ENCODE measurements at regions of chr11 and their contacts with region 1.

Region 1: GRCh38 chr11:126989942-126990715 is 10.4 kb downstream of the KIRREL3 start:
- DNase-seq: peak; percentile 3 to 61 (median 28)
- ATAC-seq: no peak
- H3K4me3 ChIP-seq: no peak overlapping the region
- H3K4me3 Mint-ChIP-seq: no peak overlapping the region
- H3K27ac ChIP-seq: no peak overlapping the region
- H3K27ac Mint-ChIP-seq: no peak overlapping the region
- H3K4me1 ChIP-seq: peaks cover 3% of the 10 kb centered on the region
- H3K4me1 Mint-ChIP-seq: no peaks in the 10 kb centered on the region
- H3K27me3 ChIP-seq: peaks cover 0 to 13% of the 10 kb centered on the region in 2 experiments
- H3K27me3 Mint-ChIP-seq: peaks cover 44% of the 10 kb centered on the region
- CTCF ChIP-seq: peak; percentile 58

Region 2: GRCh38 chr11:125923012-125923579 is 1067.0 kb before region 1 on chr11:
- CTCF ChIA-PET with region 1: no interaction called
- POLR2A ChIA-PET with region 1: no interaction called
- intact Hi-C with region 1: loop called in 1 of 2 experiments (anchors 5 kb)
- DNase-seq: peak; percentile 29 to 78 (median 42)
- ATAC-seq: peak; percentile 61
- H3K4me3 ChIP-seq: no peak overlapping the region
- H3K4me3 Mint-ChIP-seq: no peak overlapping the region
- H3K27ac ChIP-seq: no peak overlapping the region
- H3K27ac Mint-ChIP-seq: no peak overlapping the region
- H3K4me1 ChIP-seq: no peaks in the 10 kb centered on the region
- H3K4me1 Mint-ChIP-seq: no peaks in the 10 kb centered on the region
- H3K27me3 ChIP-seq: peaks cover 2 to 3% of the 10 kb centered on the region in 2 experiments
- H3K27me3 Mint-ChIP-seq: peaks cover 22% of the 10 kb centered on the region
- CTCF ChIP-seq: peak; percentile 79

Region 3: DNA sequence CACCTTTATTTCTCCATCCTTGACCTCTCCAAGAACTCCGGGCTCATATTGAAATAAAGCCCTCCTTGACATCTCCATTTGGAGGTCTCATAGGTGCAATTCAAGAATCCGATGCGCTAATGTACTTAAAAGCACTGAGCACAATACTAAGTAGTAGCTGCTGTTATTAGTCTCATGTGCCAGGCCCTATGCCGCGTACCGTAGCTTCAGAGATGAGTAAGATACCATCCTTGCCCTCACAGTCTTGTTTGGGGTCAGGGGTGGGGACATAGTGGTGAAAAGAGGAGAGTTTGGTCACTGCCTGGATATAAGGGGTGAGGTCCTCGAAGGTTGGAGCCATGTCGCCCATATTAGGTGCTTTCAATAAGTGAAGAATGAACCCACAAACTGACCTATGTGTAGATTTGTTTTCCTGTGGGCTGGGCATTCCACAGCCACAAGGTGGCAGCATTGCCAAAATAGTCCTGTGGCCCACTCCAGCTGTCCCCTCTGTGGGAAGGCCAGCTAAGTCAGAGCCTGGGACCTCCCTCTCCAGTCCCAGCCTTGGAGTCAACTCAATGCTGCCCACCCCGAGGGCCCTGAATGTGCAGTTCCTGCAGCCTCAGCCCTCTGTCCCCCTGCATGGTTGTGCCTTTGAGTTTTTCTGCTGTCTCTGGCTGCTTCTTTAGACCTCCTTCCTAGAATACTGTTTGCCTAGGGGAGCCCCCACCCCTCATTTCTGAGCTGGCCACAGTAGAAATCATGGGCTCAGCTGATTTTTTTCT is 679.7 kb before region 1 on chr11:
- CTCF ChIA-PET with region 1: no interaction called
- POLR2A ChIA-PET with region 1: no interaction called
- intact Hi-C with region 1: loop called in 1 of 2 experiments (anchors 10 kb)
- DNase-seq: peak; percentile 30 to 72 (median 45)
- ATAC-seq: peak; percentile 55
- H3K4me3 ChIP-seq: no peak overlapping the region
- H3K4me3 Mint-ChIP-seq: no peak overlapping the region
- H3K27ac ChIP-seq: no peak overlapping the region
- H3K27ac Mint-ChIP-seq: peak overlapping the region; percentile 29
- H3K4me1 ChIP-seq: peaks cover 22% of the 10 kb centered on the region
- H3K4me1 Mint-ChIP-seq: peaks cover 45% of the 10 kb centered on the region
- H3K27me3 ChIP-seq: no peaks in the 10 kb centered on the region
- H3K27me3 Mint-ChIP-seq: no peaks in the 10 kb centered on the region
- CTCF ChIP-seq: peak; percentile 83

Region 4: GRCh38 chr11:126440792-126441514 is 549.2 kb before region 1 on chr11:
- CTCF ChIA-PET with region 1: no interaction called
- POLR2A ChIA-PET with region 1: no interaction called
- intact Hi-C with region 1: loop called (anchors 2 kb)
- DNase-seq: peak; percentile 47 to 83 (median 64)
- ATAC-seq: peak; percentile 66
- H3K4me3 ChIP-seq: no peak overlapping the region
- H3K4me3 Mint-ChIP-seq: no peak overlapping the region
- H3K27ac ChIP-seq: no peak overlapping the region
- H3K27ac Mint-ChIP-seq: no peak overlapping the region
- H3K4me1 ChIP-seq: peaks cover 6% of the 10 kb centered on the region
- H3K4me1 Mint-ChIP-seq: peaks cover 6% of the 10 kb centered on the region
- H3K27me3 ChIP-seq: peaks cover 0 to 7% of the 10 kb centered on the region in 2 experiments
- H3K27me3 Mint-ChIP-seq: peaks cover 6% of the 10 kb centered on the region
- CTCF ChIP-seq: peak; percentile 98

Region 5: GRCh38 chr11:127233998-127234397 is 243.9 kb after region 1 on chr11:
- CTCF ChIA-PET with region 1: no interaction called
- POLR2A ChIA-PET with region 1: no interaction called
- intact Hi-C with region 1: no loop called
- DNase-seq: no peak
- ATAC-seq: no peak
- H3K4me3 ChIP-seq: no peak overlapping the region
- H3K4me3 Mint-ChIP-seq: no peak overlapping the region
- H3K27ac ChIP-seq: no peak overlapping the region
- H3K27ac Mint-ChIP-seq: no peak overlapping the region
- H3K4me1 ChIP-seq: no peaks in the 10 kb centered on the region
- H3K4me1 Mint-ChIP-seq: no peaks in the 10 kb centered on the region
- H3K27me3 ChIP-seq: no peaks in the 10 kb centered on the region
- H3K27me3 Mint-ChIP-seq: no peaks in the 10 kb centered on the region
- CTCF ChIP-seq: no peak

Measured in CD4-positive, alpha-beta T cell (primary cell).